CD8-positive, alpha-beta memory T cell (primary cell): ENCODE measurements at regions of chr5 and their contacts with region 1.

Region 1: DNA sequence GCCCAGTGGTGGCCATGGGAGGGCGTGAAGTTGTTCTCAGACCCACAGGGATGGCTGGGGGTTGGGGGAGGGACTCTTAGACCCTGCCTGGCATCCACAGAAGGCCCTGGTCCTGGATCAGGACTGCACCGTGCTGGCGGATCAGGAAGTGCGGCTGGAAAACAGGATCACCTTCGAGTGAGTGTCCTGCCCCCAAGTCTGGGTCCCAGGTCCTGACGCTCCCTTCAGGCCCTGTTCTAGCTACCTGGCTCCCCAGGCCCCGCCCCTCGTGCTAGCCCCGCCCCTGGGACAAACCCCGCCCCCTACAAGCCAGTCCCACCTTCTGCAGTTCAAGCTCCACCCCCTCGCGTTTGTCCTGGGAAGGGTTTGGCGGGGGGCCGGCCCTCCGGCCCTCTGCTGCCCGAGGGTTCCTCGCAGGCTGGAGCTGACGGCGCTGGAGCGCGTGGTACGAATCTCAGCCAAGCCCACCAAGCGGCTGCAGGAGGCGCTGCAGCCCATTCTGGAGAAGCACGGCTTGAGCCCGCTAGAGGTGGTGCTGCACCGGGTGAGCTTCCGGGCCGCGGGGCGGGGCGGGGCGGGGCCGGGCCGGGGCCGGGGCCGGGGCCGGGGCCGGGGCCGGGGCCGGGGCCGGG is 12.9 kb downstream of the RGS14 start:
- DNase-seq: peak; percentile 36 to 78 (median 50)
- H3K4me3 ChIP-seq: no peak overlapping the region
- H3K4me3 Mint-ChIP-seq: peak overlapping the region in 2 of 7 donors; percentile 43 to 64
- H3K27ac ChIP-seq: no peak overlapping the region
- H3K27ac Mint-ChIP-seq: peak overlapping the region in 3 of 8 donors; percentile 29 to 81 (median 51)
- H3K4me1 ChIP-seq: peaks cover 66% of the 10 kb centered on the region
- H3K4me1 Mint-ChIP-seq: peaks cover 57 to 77% (median 64%) of the 10 kb centered on the region in 3 donors
- H3K27me3 ChIP-seq: no peaks in the 10 kb centered on the region
- H3K27me3 Mint-ChIP-seq: peaks cover 0 to 1% of the 10 kb centered on the region in 2 donors

Region 2: DNA sequence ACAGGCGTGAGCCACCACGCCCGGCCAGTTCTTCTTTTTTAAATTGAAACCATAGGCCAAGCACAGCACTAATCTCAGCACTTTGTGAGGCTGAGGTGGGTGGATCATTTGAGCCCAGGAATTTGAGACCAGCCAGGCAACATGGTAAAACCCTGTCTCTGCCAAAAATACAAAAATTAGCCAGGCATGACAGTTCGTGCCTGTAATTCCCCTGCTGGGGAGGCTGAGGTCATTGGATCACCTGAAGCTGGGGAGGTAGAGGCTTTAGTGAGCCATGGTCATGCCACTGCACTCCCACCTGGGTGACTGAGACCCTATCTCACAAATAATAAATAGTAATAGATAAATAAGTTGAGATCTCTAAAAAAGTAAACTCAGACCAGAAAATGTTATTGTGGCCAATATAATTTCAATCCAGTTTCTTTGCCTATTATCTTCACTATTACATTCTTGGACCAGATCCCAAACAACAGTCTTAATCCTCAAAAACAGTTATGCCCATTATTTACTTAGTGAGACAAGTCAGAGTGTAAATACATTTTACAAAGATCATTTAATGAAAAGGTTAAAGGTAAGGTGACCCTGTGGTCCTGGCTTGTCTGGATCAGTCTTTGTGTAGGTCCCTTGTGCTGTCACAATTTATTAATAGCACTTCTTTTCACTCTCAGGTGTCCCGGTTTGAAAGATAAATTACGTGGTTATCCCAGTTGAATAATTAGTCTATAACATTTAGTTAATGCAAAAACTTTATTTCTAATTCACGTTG is 120.7 kb before region 1 on chr5:
- CTCF ChIA-PET with region 1: no interaction called
- POLR2A ChIA-PET with region 1: no interaction called
- DNase-seq: no peak
- H3K4me3 ChIP-seq: no peak overlapping the region
- H3K4me3 Mint-ChIP-seq: no peak overlapping the region
- H3K27ac ChIP-seq: no peak overlapping the region
- H3K27ac Mint-ChIP-seq: peak overlapping the region in 2 of 8 donors; percentile 17 to 23
- H3K4me1 ChIP-seq: no peaks in the 10 kb centered on the region
- H3K4me1 Mint-ChIP-seq: peaks cover 0 to 4% (median 1%) of the 10 kb centered on the region in 3 donors
- H3K27me3 ChIP-seq: no peaks in the 10 kb centered on the region
- H3K27me3 Mint-ChIP-seq: no peaks in the 10 kb centered on the region

Region 3: GRCh38 chr5:177317959-177318377 is 52.6 kb before region 1 on chr5:
- CTCF ChIA-PET with region 1: interaction called, 15 read pairs
- POLR2A ChIA-PET with region 1: no interaction called
- DNase-seq: peak; percentile 55 to 80 (median 63)
- H3K4me3 ChIP-seq: no peak overlapping the region
- H3K4me3 Mint-ChIP-seq: no peak overlapping the region
- H3K27ac ChIP-seq: no peak overlapping the region
- H3K27ac Mint-ChIP-seq: peak overlapping the region in 3 of 8 donors; percentile 5 to 48 (median 37)
- H3K4me1 ChIP-seq: peaks cover 6% of the 10 kb centered on the region
- H3K4me1 Mint-ChIP-seq: peaks cover 11 to 19% (median 19%) of the 10 kb centered on the region in 3 donors
- H3K27me3 ChIP-seq: no peaks in the 10 kb centered on the region
- H3K27me3 Mint-ChIP-seq: peaks cover 0 to 3% of the 10 kb centered on the region in 2 donors

Region 4: DNA sequence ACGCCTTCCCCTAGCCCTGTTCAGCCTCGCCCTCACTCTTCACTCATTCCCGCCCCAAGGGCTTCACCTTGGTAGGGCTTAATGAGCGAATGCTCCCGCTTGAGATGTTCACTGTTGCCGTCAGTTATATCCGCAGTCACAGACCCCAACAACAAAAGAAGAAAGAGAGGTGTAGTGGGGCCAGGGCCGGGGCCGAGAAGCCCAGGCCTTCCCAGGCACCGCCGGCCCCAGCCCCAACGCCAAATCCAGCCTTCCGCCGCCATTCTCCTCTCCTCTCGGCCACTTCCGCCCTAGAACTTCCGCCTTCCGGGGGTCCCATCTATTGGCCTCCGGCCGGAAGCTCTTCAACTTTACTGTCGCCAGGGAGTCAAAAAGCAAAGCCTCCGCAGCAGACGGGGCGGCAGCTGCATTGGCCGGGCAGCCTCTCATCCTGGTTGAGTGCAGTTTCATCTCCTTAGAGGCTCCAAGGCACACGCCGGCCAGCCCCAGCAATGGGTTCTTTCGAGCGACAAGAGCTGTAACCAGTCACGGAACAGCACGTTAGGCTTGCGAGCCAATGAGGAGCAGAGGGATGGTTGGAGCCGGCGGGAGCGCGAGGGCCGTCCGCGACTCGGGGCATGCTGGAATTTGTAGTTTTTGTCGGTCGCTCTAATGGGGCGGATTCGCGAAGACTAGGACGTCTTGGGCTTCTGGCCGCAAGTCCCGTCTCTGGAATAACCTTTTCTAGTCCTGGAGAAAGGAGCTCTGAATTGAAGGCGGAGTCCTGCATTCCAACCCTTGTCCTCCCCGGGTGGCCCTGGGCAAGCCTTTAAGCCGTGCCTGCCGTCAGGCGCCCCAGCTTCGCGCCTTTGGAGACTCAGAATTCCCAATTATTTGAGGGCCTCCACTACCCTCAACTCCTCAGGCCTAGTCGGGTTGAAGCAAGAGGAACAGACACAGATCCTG is 18.9 kb before region 1 on chr5 and contains the start of gene LMAN2:
- CTCF ChIA-PET with region 1: interaction called, 118 read pairs
- POLR2A ChIA-PET with region 1: interaction called, 23 read pairs
- DNase-seq: peak; percentile 85 to 94 (median 91)
- H3K4me3 ChIP-seq: peak within 1 kb of the TSS; percentile 93
- H3K4me3 Mint-ChIP-seq: peak within 1 kb of the TSS; percentile 97 to 100 (median 98)
- H3K27ac ChIP-seq: peak within 1 kb of the TSS; percentile 96
- H3K27ac Mint-ChIP-seq: peak within 1 kb of the TSS; percentile 94 to 100 (median 100)
- H3K4me1 ChIP-seq: peaks cover 57% of the 10 kb centered on the region
- H3K4me1 Mint-ChIP-seq: peaks cover 61 to 76% (median 72%) of the 10 kb centered on the region in 3 donors
- H3K27me3 ChIP-seq: no peaks in the 10 kb centered on the region
- H3K27me3 Mint-ChIP-seq: no peaks in the 10 kb centered on the region
- total RNA-seq, gene LMAN2: 112 to 126 TPM

Region 5: GRCh38 chr5:177382423-177383029 is 11.9 kb after region 1 on chr5:
- CTCF ChIA-PET with region 1: interaction called, 136 read pairs
- POLR2A ChIA-PET with region 1: interaction called, 7 read pairs
- DNase-seq: peak in 1 of 5 donors; percentile 39
- H3K4me3 ChIP-seq: no peak overlapping the region
- H3K4me3 Mint-ChIP-seq: no peak overlapping the region
- H3K27ac ChIP-seq: no peak overlapping the region
- H3K27ac Mint-ChIP-seq: no peak overlapping the region
- H3K4me1 ChIP-seq: peaks cover 41% of the 10 kb centered on the region
- H3K4me1 Mint-ChIP-seq: peaks cover 14 to 30% (median 16%) of the 10 kb centered on the region in 3 donors
- H3K27me3 ChIP-seq: no peaks in the 10 kb centered on the region
- H3K27me3 Mint-ChIP-seq: peaks cover 0 to 2% of the 10 kb centered on the region in 2 donors

Region 6: DNA sequence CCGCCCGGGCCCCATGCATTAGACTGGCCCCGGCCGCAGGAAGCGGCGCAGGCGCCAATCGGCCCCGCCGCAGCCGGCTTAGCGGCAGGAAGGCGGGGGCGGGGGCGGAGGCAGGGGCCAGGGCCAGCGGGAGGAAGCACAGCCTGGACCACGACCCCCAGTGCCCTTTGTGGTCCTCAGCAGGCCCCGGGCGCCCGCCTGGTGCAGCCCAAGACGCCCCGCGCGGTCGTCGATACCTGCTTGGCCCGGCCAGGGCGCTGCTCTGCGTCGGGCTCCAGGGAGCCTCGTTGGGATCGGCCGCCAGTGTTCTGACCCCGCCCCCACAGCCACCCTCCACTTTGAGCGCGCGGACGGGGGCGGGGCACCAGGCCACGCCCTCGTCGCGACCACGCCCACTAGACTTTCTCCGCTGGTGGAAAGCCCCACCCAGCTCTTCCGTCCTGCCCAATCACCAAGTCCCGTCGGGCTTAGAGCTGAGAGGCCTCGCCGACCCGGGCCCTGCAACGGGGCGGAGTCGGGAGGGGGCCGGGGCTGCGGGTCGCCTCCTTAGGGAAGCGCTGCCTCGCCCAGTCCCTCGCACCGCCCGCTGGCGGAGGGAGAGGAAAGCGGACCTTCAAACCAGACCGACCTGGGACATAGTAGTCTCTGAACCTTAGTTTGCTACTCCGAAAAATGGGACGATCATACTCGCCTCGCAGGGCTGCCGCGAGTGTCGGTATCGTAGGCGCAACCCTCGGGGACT is 126.9 kb after region 1 on chr5 and contains the start of gene PDLIM7:
- CTCF ChIA-PET with region 1: interaction called, 22 read pairs
- POLR2A ChIA-PET with region 1: no interaction called
- DNase-seq: peak; percentile 89 to 95 (median 90)
- H3K4me3 ChIP-seq: peak within 1 kb of the TSS; percentile 81
- H3K4me3 Mint-ChIP-seq: peak within 1 kb of the TSS; percentile 69 to 89 (median 86)
- H3K27ac ChIP-seq: peak within 1 kb of the TSS; percentile 69
- H3K27ac Mint-ChIP-seq: peak within 1 kb of the TSS in 7 of 8 donors; percentile 0 to 91 (median 75)
- H3K4me1 ChIP-seq: peaks cover 22% of the 10 kb centered on the region
- H3K4me1 Mint-ChIP-seq: peaks cover 13 to 42% (median 23%) of the 10 kb centered on the region in 3 donors
- H3K27me3 ChIP-seq: no peaks in the 10 kb centered on the region
- H3K27me3 Mint-ChIP-seq: peaks cover 0 to 2% of the 10 kb centered on the region in 2 donors
- total RNA-seq, gene PDLIM7: 28.4 to 30.4 TPM